ENCODE measurements at regions of chr7 and their contacts with region 1.

Region 1: DNA sequence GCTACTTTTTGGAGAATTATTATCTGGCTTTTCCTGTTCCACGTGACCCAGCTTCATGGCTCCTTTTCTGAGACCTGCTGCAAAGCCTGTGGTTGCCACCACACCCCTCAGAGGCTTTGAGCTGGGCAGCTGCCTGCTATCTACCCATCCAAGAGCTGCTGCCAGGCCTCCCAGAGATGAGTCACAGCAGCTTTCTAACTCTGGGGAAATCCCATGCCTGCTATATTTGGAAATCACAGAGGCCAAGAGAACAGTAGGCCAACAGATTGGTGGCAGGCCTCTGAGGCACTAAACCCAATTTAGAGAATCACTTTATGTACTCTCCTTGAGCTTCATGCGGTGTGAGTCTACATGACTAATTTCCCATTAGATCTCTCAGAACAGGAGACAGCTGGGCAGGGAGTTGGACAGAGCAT is 35.2 kb downstream of the SGCE start:
- DNase-seq: peak; percentile 72
- H3K4me3 Mint-ChIP-seq: no peak overlapping the region
- H3K27ac Mint-ChIP-seq: no peak overlapping the region
- H3K4me1 Mint-ChIP-seq: peaks cover 11% of the 10 kb centered on the region
- H3K27me3 Mint-ChIP-seq: peaks cover 5% of the 10 kb centered on the region

Region 2: DNA sequence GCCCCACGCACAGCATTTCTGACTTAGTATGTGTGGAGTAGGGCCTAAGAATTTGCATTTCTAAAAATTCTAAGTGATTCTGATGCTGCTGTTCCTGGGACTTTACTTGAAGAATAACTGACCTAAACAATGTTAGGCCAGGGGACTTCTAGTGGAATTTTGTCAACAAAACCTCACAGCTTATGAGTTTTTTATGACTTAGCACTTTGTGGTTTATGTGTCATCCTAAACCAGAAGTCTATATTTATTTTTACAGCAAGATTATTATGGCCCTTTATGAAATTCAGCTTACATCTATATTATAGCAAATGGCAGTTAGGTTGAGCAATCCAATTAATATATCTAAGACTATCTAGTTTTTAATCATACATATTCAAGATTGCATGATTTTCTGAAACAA is 591.9 kb before region 1 on chr7:
- CTCF ChIA-PET with region 1: no interaction called
- intact Hi-C with region 1: loop called (anchors 10 kb)
- DNase-seq: no peak
- H3K4me3 Mint-ChIP-seq: no peak overlapping the region
- H3K27ac Mint-ChIP-seq: no peak overlapping the region
- H3K4me1 Mint-ChIP-seq: no peaks in the 10 kb centered on the region
- H3K27me3 Mint-ChIP-seq: peaks cover 40% of the 10 kb centered on the region

Region 3: GRCh38 chr7:94632338-94633013 is 11.8 kb after region 1 on chr7:
- CTCF ChIA-PET with region 1: no interaction called
- intact Hi-C with region 1: loop called (anchors 1 kb)
- DNase-seq: peak; percentile 5
- H3K4me3 Mint-ChIP-seq: no peak overlapping the region
- H3K27ac Mint-ChIP-seq: no peak overlapping the region
- H3K4me1 Mint-ChIP-seq: peaks cover 4% of the 10 kb centered on the region
- H3K27me3 Mint-ChIP-seq: peaks cover 11% of the 10 kb centered on the region